Astrocyte of the cerebellum (primary cell): ENCODE measurements at regions of chr4 and their contacts with region 1.

Region 1: GRCh38 chr4:21205821-21206531 is 505.7 kb downstream of the PACRGL start:
- DNase-seq: no peak
- H3K4me3 ChIP-seq: no peak overlapping the region
- CTCF ChIP-seq: no peak

Region 2: GRCh38 chr4:21113496-21114223 is 92.3 kb before region 1 on chr4:
- in situ Hi-C with region 1: no loop called
- DNase-seq: peak; percentile 23
- H3K4me3 ChIP-seq: no peak overlapping the region
- CTCF ChIP-seq: no peak

Region 3: DNA sequence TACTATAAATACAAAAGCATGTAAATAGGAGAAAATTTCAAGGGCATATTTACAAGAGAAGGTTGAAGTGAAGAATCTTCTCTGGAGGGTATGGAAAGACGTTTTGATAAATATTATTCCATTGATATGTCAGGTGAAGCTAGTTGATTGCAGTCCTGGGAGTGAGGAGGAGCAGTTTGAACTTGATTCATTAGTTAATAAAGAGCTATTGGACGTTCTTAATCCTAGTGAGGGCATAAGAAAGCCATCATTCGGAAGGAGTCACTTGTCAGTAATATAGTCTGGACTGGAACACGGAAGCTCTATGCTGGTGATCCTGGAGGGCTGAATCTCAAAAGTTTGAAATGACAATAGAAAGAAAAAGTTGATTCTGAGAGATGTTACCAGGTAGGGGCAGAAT is 50.6 kb before region 1 on chr4:
- in situ Hi-C with region 1: no loop called
- DNase-seq: no peak
- H3K4me3 ChIP-seq: no peak overlapping the region
- CTCF ChIP-seq: no peak

Region 4: GRCh38 chr4:21248331-21248730 is 42.4 kb after region 1 on chr4:
- in situ Hi-C with region 1: loop called (anchors 5 kb)
- DNase-seq: no peak
- H3K4me3 ChIP-seq: no peak overlapping the region
- CTCF ChIP-seq: no peak